ENCODE measurements at regions of chr2 and their contacts with region 1.

Region 1: GRCh38 chr2:159445307-159445706 is 158.8 kb upstream of the WDSUB1 start:
- DNase-seq: no peak
- ATAC-seq: no peak
- H3K4me3 ChIP-seq: no peak overlapping the region
- H3K27ac ChIP-seq: no peak overlapping the region
- H3K4me1 ChIP-seq: peaks cover 0 to 12% (median 3%) of the 10 kb centered on the region in 9 donors
- H3K27me3 ChIP-seq: no peaks in the 10 kb centered on the region
- CTCF ChIP-seq: no peak

Region 2: DNA sequence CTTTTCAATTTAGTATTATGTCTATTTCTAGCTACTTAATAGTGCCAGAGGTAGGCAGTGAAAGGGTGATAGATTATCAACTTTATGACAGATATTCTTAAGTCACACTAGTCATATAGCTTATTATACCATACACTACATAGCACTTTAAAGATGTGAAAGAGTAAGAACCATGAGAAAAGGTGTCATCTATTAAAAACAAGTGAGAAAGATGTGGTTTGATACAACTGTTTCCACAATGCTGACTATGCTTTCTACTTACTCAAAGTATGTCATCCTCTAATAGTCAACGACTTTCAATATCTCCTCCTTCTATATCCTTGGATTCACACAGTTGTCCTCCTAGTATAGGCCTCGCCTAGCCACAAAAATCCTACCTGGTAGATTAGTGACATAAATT is 25.9 kb before region 1 on chr2:
- intact Hi-C with region 1: loop called in 1 of 10 experiments (anchors 1 kb)
- DNase-seq: no peak
- ATAC-seq: no peak
- H3K4me3 ChIP-seq: no peak overlapping the region
- H3K27ac ChIP-seq: no peak overlapping the region
- H3K4me1 ChIP-seq: no peaks in the 10 kb centered on the region
- H3K27me3 ChIP-seq: no peaks in the 10 kb centered on the region
- CTCF ChIP-seq: no peak

Region 3: GRCh38 chr2:159585622-159586021 is 140.3 kb after region 1 on chr2:
- intact Hi-C with region 1: no loop called
- DNase-seq: no peak
- ATAC-seq: no peak
- H3K4me3 ChIP-seq: no peak overlapping the region
- H3K27ac ChIP-seq: no peak overlapping the region
- H3K4me1 ChIP-seq: peaks cover 0 to 16% (median 0%) of the 10 kb centered on the region in 9 donors
- H3K27me3 ChIP-seq: no peaks in the 10 kb centered on the region
- CTCF ChIP-seq: no peak

Region 4: DNA sequence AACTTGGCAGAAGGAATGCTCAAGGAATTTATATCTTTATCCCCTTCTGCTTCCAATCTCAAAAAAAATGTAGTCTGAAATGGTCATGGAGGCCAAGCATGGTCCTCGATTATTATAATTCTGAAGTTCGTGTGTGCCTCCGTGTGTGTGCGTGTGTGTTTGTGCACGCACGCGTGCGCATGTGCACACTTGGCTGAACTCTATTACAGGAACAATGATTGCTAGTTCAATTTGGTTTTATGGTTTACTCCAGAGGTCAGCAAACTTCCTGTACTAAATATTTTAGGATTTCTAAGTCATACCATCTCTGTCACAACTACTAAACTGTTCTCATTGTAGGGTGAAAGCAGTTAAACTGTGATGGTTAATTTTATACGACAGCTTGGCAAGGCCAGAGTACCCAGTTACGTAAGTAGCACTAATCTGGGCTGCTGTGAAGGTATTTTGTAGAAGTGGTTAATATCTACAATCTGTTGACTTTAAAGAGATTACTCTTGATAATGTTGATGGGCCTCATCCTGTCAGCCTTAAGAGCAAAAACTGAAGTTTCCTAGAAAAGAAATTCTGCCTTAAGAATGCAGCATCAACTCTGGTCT is 261.2 kb after region 1 on chr2:
- intact Hi-C with region 1: no loop called
- DNase-seq: no peak
- ATAC-seq: peak in 5 of 8 donors; percentile 35 to 46 (median 43)
- H3K4me3 ChIP-seq: peak overlapping the region in 3 of 10 donors; percentile 5 to 24 (median 21)
- H3K27ac ChIP-seq: peak overlapping the region in 5 of 10 donors; percentile 19 to 45 (median 34)
- H3K4me1 ChIP-seq: peaks cover 0 to 26% (median 21%) of the 10 kb centered on the region in 9 donors
- H3K27me3 ChIP-seq: no peaks in the 10 kb centered on the region
- CTCF ChIP-seq: no peak